PC-3 (cell line): ENCODE measurements at regions of chr4 and their contacts with region 1.

Region 1: GRCh38 chr4:22552812-22553211 is 36.9 kb upstream of the ADGRA3 start:
- DNase-seq: peak; percentile 2
- ATAC-seq: no peak
- H3K4me3 ChIP-seq: no peak overlapping the region
- H3K27ac ChIP-seq: no peak overlapping the region
- H3K4me1 ChIP-seq: peaks cover 8% of the 10 kb centered on the region; the same call in 1 of the 2 replicates
- H3K27me3 ChIP-seq: no peaks in the 10 kb centered on the region
- CTCF ChIP-seq: no peak

Region 2: GRCh38 chr4:22129454-22130029 is 423.3 kb before region 1 on chr4:
- CTCF ChIA-PET with region 1: no interaction called
- POLR2A ChIA-PET with region 1: no interaction called
- intact Hi-C with region 1: no loop called
- DNase-seq: peak; percentile 69
- ATAC-seq: peak; percentile 33; the same call in 1 of the 2 replicates
- H3K4me3 ChIP-seq: no peak overlapping the region
- H3K27ac ChIP-seq: no peak overlapping the region
- H3K4me1 ChIP-seq: no peaks in the 10 kb centered on the region
- H3K27me3 ChIP-seq: no peaks in the 10 kb centered on the region
- CTCF ChIP-seq: peak; percentile 74

Region 3: GRCh38 chr4:24321151-24321550 is 1768.3 kb after region 1 on chr4:
- CTCF ChIA-PET with region 1: no interaction called
- POLR2A ChIA-PET with region 1: interaction called, 14 read pairs
- intact Hi-C with region 1: no loop called
- DNase-seq: peak; percentile 66
- ATAC-seq: peak; percentile 72
- H3K4me3 ChIP-seq: no peak overlapping the region
- H3K27ac ChIP-seq: peak overlapping the region; percentile 32
- H3K4me1 ChIP-seq: 0 out of 2 replicates have a peak, but pooled peaks cover 3% of the 10 kb centered on the region
- H3K27me3 ChIP-seq: peaks cover 20% of the 10 kb centered on the region
- CTCF ChIP-seq: no peak